ENCODE measurements at regions of chr3 and their contacts with region 1.

Region 1: DNA sequence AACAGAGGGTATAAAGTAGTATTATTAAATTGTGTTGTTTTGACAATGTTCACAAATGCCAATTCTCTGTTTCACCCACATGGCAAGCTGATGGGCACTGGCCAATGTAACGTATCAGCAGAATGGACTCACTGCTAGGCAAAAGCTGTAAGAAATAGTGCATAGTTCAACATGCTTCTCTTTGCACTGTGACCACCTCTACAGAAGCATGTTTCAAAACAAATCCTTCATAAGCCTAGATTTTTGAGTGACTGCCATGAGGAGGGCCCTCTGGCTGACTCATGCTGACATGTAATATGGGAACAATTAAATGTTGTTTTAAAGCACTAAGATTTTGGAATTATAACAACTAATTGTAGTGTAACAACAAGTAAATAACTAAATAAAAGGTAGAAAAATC is 3.2 kb downstream of the GBE1 start:
- DNase-seq: no peak
- H3K4me3 ChIP-seq: no peak overlapping the region
- H3K27ac ChIP-seq: peak overlapping the region in 3 of 4 donors; percentile 19 to 98 (median 21)
- H3K4me1 ChIP-seq: peaks cover 0 to 30% (median 20%) of the 10 kb centered on the region in 4 donors
- H3K27me3 ChIP-seq: no peaks in the 10 kb centered on the region
- CTCF ChIP-seq: no peak
- EP300 ChIP-seq: no peak
- POLR2A ChIP-seq: no peak

Region 2: GRCh38 chr3:80472451-80472850 is 1285.8 kb before region 1 on chr3:
- intact Hi-C with region 1: no loop called
- DNase-seq: no peak
- H3K4me3 ChIP-seq: no peak overlapping the region
- H3K27ac ChIP-seq: no peak overlapping the region
- H3K4me1 ChIP-seq: no peaks in the 10 kb centered on the region
- H3K27me3 ChIP-seq: no peaks in the 10 kb centered on the region
- CTCF ChIP-seq: no peak
- EP300 ChIP-seq: no peak
- POLR2A ChIP-seq: no peak

Region 3: GRCh38 chr3:81443958-81444357 is 314.3 kb before region 1 on chr3:
- intact Hi-C with region 1: no loop called
- DNase-seq: no peak
- H3K4me3 ChIP-seq: no peak overlapping the region
- H3K27ac ChIP-seq: no peak overlapping the region
- H3K4me1 ChIP-seq: no peaks in the 10 kb centered on the region
- H3K27me3 ChIP-seq: no peaks in the 10 kb centered on the region
- CTCF ChIP-seq: no peak
- EP300 ChIP-seq: no peak
- POLR2A ChIP-seq: no peak

Region 4: DNA sequence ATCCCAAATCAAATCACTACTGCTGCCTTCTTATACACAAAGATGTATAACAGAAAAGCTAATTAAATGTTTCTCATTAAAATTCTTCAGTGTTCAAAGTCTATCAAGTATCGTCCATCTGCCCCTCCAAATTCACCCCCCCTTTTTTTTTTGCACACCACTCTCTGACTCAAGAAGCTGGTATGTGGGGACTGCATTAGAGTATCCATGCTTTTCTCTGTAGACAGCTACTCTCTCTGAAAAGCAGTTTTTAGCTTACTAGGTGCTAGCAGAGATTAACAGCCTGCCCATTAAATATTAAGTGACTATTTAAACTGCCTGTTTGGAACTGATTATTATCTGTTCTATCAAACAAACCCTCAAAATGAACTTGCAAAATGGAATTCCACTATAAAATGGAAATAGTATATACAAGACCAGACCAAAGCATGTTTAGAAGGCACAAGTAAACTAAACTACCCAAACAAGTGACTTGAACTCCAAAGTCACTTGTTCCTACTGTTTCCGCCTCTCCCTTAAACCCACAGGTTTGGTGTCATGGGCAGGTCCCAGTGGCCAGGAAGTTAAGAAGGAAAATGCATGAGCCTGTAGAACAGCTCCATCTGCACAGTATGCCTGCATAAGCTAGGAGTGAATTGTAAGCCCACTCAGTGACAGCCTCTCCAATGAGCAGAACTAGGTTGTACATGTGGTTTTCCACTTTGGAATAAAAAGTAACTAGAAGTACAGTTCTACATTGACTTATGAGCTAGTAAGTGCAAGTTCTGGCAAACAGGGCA is 29.3 kb before region 1 on chr3:
- intact Hi-C with region 1: no loop called
- DNase-seq: no peak
- H3K4me3 ChIP-seq: peak overlapping the region in 1 of 4 donors; percentile 16
- H3K27ac ChIP-seq: no peak overlapping the region
- H3K4me1 ChIP-seq: peaks cover 0 to 10% (median 2%) of the 10 kb centered on the region in 4 donors
- H3K27me3 ChIP-seq: no peaks in the 10 kb centered on the region
- CTCF ChIP-seq: no peak
- EP300 ChIP-seq: no peak
- POLR2A ChIP-seq: no peak

Region 5: DNA sequence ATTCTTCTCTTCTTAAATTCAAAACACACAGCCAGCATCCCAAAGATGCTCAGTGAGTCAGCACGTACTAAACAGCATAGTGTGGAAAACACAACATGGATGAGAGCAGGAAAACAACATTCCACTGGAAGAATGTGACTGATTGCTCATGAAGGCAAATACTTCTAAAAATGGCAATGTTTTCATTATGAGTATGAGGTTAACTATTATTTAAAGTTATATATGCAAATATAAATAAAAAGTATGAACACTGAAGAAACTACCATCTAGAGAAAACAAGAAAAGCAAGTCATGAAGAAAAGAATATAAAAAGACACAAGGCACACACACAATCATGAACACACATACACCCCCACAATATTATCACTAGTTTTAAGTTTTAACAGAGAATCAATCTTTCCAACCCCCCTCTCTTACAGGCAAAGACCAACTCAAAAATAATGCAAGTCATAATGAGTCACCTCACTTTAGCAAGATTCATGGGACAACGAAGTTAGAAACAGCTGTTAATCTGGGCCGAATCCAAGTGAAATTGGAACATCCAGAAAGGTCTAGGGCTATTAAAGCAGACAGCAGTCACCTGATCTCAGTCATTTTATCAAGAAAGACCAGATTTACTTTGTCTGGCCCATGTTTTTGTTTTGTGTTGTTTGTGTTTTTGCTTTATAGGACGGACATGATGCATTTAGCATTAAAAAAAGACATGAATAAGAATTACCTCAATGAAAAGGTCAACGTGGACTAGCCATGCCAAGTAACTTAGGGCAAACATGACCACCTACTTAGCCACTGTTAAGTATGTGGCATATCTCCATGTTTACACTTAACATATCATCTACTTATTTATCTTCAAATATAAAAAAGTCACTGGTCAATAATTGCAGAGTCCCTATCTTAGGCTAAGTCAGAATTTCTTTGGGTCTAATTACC is 14.9 kb before region 1 on chr3:
- intact Hi-C with region 1: loop called (anchors 2 kb)
- DNase-seq: peak; percentile 74
- H3K4me3 ChIP-seq: no peak overlapping the region
- H3K27ac ChIP-seq: peak overlapping the region; percentile 55 to 79 (median 69)
- H3K4me1 ChIP-seq: peaks cover 0 to 46% (median 35%) of the 10 kb centered on the region in 4 donors
- H3K27me3 ChIP-seq: no peaks in the 10 kb centered on the region
- CTCF ChIP-seq: no peak
- EP300 ChIP-seq: peak in 1 of 4 donors; percentile 41
- POLR2A ChIP-seq: no peak

Measured in sigmoid colon (tissue), 7 donors.